ENCODE measurements at regions of chr4 and their contacts with region 1.

Region 1: GRCh38 chr4:45442466-45442865 is 681.4 kb downstream of the GABRG1 start:
- DNase-seq: peak; percentile 42
- H3K4me3 ChIP-seq: no peak overlapping the region
- H3K27ac ChIP-seq: no peak overlapping the region
- H3K4me1 ChIP-seq: no peaks in the 10 kb centered on the region
- H3K27me3 ChIP-seq: no peaks in the 10 kb centered on the region
- CTCF ChIP-seq: peak; percentile 63

Region 2: GRCh38 chr4:44760142-44760898 is 682.1 kb before region 1 on chr4:
- CTCF ChIA-PET with region 1: no interaction called
- POLR2A ChIA-PET with region 1: no interaction called
- intact Hi-C with region 1: loop called (anchors 2 kb)
- DNase-seq: peak; percentile 70
- H3K4me3 ChIP-seq: no peak overlapping the region
- H3K27ac ChIP-seq: no peak overlapping the region
- H3K4me1 ChIP-seq: no peaks in the 10 kb centered on the region
- H3K27me3 ChIP-seq: no peaks in the 10 kb centered on the region
- CTCF ChIP-seq: peak; percentile 65

Region 3: DNA sequence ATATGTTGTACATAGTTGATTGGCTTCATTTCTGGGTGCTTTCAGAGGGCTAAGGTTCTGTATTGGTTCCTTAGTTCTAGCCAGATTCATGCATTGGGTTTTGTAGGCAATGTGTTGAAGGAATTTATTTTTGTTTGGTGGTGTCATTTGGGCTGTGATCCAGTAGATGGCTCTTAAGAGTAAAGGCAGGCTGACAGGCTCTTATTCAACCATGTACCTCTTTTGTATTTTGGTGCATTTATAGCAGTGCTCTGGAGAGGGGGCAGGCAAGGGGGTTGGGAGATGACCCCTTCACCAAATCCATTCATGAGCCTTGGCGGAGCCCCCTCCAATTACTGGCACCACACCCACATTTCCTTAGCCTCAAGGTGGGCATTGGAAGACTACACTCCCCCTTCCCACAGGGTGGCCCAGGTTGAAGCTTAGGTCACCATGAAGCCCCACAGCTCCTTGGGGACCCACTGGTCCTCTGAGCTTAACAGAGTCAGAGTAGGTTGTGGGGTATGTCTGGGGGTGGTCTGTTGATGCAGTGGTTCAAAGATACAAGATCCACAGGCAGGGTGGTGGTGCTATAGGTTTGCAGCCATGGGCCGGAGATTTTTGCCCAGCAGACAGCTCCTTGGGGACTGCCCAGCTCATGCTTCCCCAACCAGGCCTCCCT is 573.1 kb before region 1 on chr4:
- CTCF ChIA-PET with region 1: no interaction called
- POLR2A ChIA-PET with region 1: no interaction called
- intact Hi-C with region 1: loop called (anchors 5 kb)
- DNase-seq: peak; percentile 26
- H3K4me3 ChIP-seq: no peak overlapping the region
- H3K27ac ChIP-seq: no peak overlapping the region
- H3K4me1 ChIP-seq: no peaks in the 10 kb centered on the region
- H3K27me3 ChIP-seq: no peaks in the 10 kb centered on the region
- CTCF ChIP-seq: peak; percentile 51

Region 4: DNA sequence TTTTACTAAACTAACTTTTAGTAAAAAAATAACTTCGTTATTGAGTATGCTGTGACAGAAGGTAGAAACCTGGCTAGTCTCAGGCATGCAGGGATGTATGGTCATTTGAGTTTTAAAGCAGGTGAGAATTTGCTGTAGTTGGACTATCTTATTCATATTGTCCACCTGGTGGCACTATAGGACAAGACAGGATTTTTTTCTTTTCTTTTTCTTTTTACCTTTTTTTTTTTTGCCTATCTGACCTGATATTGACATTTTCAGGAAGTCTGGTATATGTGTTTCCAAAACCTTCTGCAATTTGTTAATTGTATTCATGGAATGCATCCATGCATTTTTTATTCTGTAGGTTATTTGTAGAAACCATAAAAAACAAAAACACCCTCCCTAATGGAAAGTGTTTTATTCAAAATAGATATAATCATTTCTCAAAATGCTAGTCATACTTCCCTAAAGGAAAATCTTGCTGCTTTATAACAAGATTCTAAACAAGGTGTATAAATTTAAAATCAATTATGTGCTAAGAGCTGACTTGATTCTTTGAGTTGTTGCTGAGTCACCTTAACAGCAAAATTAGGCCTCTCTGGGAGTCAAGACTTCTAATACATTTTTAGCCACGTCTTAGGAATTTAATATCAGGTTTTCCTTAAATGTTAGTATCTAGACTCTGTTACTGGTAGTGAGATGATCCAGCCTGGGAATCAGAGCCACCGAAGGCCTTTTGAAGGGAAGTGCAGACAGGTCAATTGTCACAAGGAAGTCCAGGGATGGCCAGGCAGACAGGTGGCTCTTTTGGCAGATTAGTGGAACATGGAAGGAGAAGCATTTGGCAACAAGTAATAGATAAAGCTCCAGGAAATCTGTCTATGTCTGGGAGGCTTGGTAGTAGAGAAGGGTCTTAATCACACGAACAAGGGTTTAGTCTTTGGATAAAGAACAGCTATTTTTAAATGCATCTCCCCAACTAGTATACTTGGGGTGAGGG is 514.8 kb before region 1 on chr4:
- CTCF ChIA-PET with region 1: no interaction called
- POLR2A ChIA-PET with region 1: no interaction called
- intact Hi-C with region 1: loop called (anchors 2 kb)
- DNase-seq: peak; percentile 53
- H3K4me3 ChIP-seq: no peak overlapping the region
- H3K27ac ChIP-seq: no peak overlapping the region
- H3K4me1 ChIP-seq: no peaks in the 10 kb centered on the region
- H3K27me3 ChIP-seq: no peaks in the 10 kb centered on the region
- CTCF ChIP-seq: peak; percentile 63

Region 5: DNA sequence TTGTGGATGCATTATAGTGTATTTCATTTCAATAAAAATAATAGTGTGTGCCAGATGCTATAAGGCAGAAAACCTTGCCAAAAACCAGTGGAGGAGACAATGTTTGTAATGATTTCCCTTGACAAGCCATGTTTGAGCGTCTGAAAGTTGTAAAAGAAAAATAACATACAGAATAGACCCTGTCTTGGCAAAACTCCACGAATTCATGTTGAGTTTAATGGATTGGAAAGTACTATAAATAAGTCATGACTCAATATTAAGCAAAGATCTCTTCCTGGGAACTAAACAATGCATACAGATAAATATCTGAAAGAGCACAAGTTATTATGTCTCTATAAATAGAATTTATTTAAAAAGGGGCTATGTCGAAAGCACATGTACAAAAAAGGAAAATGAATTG is 137.9 kb after region 1 on chr4:
- CTCF ChIA-PET with region 1: no interaction called
- POLR2A ChIA-PET with region 1: no interaction called
- intact Hi-C with region 1: no loop called
- DNase-seq: peak; percentile 26
- H3K4me3 ChIP-seq: no peak overlapping the region
- H3K27ac ChIP-seq: no peak overlapping the region
- H3K4me1 ChIP-seq: no peaks in the 10 kb centered on the region
- H3K27me3 ChIP-seq: no peaks in the 10 kb centered on the region
- CTCF ChIP-seq: no peak

Measured in A673 (cell line).